Ascending aorta (tissue), 2 donors: ENCODE measurements at regions of chr1 and their contacts with region 1.

Region 1: GRCh38 chr1:13699936-13700520 is at the start of gene PRDM2:
- DNase-seq: peak in 1 of 2 donors; percentile 78
- H3K4me3 ChIP-seq: peak within 1 kb of the TSS; percentile 91 to 95
- H3K27ac ChIP-seq: peak within 1 kb of the TSS; percentile 98
- H3K4me1 ChIP-seq: peaks cover 0 to 5% of the 10 kb centered on the region in 2 donors
- H3K27me3 ChIP-seq: no peaks in the 10 kb centered on the region
- CTCF ChIP-seq: no peak
- total RNA-seq, gene PRDM2: 27.2 TPM

Region 2: GRCh38 chr1:13487143-13487868 is 212.7 kb before region 1 on chr1:
- intact Hi-C with region 1: no loop called
- DNase-seq: no peak
- H3K4me3 ChIP-seq: no peak overlapping the region
- H3K27ac ChIP-seq: no peak overlapping the region
- H3K4me1 ChIP-seq: no peaks in the 10 kb centered on the region
- H3K27me3 ChIP-seq: no peaks in the 10 kb centered on the region
- CTCF ChIP-seq: no peak

Region 3: GRCh38 chr1:13792419-13792818 is 92.4 kb after region 1 on chr1:
- intact Hi-C with region 1: loop called (anchors 5 kb)
- DNase-seq: peak in 1 of 2 donors; percentile 55
- H3K4me3 ChIP-seq: no peak overlapping the region
- H3K27ac ChIP-seq: peak overlapping the region; percentile 74 to 80
- H3K4me1 ChIP-seq: peaks cover 3 to 20% of the 10 kb centered on the region in 2 donors
- H3K27me3 ChIP-seq: no peaks in the 10 kb centered on the region
- CTCF ChIP-seq: no peak